ENCODE measurements at regions of chr22 and their contacts with region 1.

Region 1: DNA sequence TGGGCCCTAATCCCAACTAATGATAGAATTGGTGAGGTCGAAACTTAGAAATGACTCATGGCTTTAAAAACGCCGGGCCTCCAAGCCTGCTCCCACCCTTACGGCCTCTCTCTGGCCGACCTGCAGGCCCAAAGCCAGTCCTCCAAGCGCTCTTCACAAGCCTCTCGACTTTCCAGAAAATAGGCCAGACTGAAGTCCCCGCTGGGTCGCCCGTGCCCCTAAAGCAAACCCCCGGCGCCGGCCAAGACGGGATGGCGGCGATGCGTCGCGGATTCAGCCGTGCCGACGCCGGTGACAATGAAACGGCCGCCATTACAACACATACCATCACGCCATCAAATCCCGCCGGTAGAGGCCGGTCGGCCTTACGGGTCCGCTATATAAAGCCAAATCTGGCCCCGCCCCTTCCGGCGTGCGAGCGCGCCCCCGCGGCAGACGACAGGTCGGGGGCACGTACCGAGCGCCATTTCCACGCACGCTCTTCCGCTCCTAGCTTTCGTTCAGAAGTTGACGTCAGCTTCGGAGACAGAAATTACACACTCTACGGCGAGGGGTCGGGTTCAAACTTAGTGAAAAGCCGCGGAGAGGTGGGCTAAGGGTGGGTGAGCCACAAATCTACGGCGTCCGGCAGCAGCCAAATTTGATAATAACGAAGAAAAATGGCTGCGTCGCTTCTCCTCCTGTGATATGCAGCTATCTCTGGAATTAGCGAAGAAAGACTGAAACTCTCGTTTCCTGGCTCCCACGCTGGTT is at the start of gene RPL3:
- DNase-seq: peak; percentile 99
- ATAC-seq: peak; percentile 87
- H3K4me3 Mint-ChIP-seq: peak within 1 kb of the TSS; percentile 100
- H3K27ac Mint-ChIP-seq: peak within 1 kb of the TSS; percentile 99
- H3K4me1 Mint-ChIP-seq: peaks cover 46% of the 10 kb centered on the region
- H3K27me3 Mint-ChIP-seq: peaks cover 2% of the 10 kb centered on the region
- CTCF ChIP-seq: no peak
- total RNA-seq, gene RPL3: 3,087 and 3,439 TPM in 2 replicates

Region 2: GRCh38 chr22:38872172-38872830 is 447.1 kb before region 1 on chr22 and contains the start of gene CBX6:
- CTCF ChIA-PET with region 1: interaction called, 11 read pairs
- POLR2A ChIA-PET with region 1: interaction called, 27 read pairs
- intact Hi-C with region 1: loop called (anchors 1 kb)
- DNase-seq: peak; percentile 97
- ATAC-seq: peak; percentile 73
- H3K4me3 Mint-ChIP-seq: peak within 1 kb of the TSS; percentile 92
- H3K27ac Mint-ChIP-seq: peak within 1 kb of the TSS; percentile 83
- H3K4me1 Mint-ChIP-seq: peaks cover 53% of the 10 kb centered on the region
- H3K27me3 Mint-ChIP-seq: peaks cover 2% of the 10 kb centered on the region
- CTCF ChIP-seq: no peak
- total RNA-seq, gene CBX6: 65.6 and 71.8 TPM in 2 replicates

Region 3: GRCh38 chr22:39152511-39153219 is 166.8 kb before region 1 on chr22 and contains the start of gene CBX7:
- CTCF ChIA-PET with region 1: interaction called, 7 read pairs
- POLR2A ChIA-PET with region 1: interaction called, 88 read pairs
- intact Hi-C with region 1: loop called (anchors 1 kb)
- DNase-seq: peak; percentile 94
- ATAC-seq: peak; percentile 84
- H3K4me3 Mint-ChIP-seq: peak within 1 kb of the TSS; percentile 84
- H3K27ac Mint-ChIP-seq: peak within 1 kb of the TSS; percentile 76
- H3K4me1 Mint-ChIP-seq: peaks cover 46% of the 10 kb centered on the region
- H3K27me3 Mint-ChIP-seq: peaks cover 16% of the 10 kb centered on the region
- CTCF ChIP-seq: no peak
- total RNA-seq, gene CBX7: 42.6 and 45.4 TPM in 2 replicates

Region 4: GRCh38 chr22:39332441-39333064 is 13.1 kb after region 1 on chr22:
- CTCF ChIA-PET with region 1: interaction called, 16 read pairs
- POLR2A ChIA-PET with region 1: interaction called, 26 read pairs
- intact Hi-C with region 1: no loop called
- DNase-seq: no peak
- ATAC-seq: no peak
- H3K4me3 Mint-ChIP-seq: no peak overlapping the region
- H3K27ac Mint-ChIP-seq: no peak overlapping the region
- H3K4me1 Mint-ChIP-seq: no peaks in the 10 kb centered on the region
- H3K27me3 Mint-ChIP-seq: no peaks in the 10 kb centered on the region
- CTCF ChIP-seq: no peak

Region 5: GRCh38 chr22:39395936-39396796 is 76.7 kb after region 1 on chr22:
- CTCF ChIA-PET with region 1: interaction called, 4 read pairs
- POLR2A ChIA-PET with region 1: interaction called, 35 read pairs
- intact Hi-C with region 1: loop called (anchors 1 kb)
- DNase-seq: no peak
- ATAC-seq: no peak
- H3K4me3 Mint-ChIP-seq: no peak overlapping the region
- H3K27ac Mint-ChIP-seq: no peak overlapping the region
- H3K4me1 Mint-ChIP-seq: peaks cover 10% of the 10 kb centered on the region
- H3K27me3 Mint-ChIP-seq: no peaks in the 10 kb centered on the region
- CTCF ChIP-seq: no peak

Region 6: DNA sequence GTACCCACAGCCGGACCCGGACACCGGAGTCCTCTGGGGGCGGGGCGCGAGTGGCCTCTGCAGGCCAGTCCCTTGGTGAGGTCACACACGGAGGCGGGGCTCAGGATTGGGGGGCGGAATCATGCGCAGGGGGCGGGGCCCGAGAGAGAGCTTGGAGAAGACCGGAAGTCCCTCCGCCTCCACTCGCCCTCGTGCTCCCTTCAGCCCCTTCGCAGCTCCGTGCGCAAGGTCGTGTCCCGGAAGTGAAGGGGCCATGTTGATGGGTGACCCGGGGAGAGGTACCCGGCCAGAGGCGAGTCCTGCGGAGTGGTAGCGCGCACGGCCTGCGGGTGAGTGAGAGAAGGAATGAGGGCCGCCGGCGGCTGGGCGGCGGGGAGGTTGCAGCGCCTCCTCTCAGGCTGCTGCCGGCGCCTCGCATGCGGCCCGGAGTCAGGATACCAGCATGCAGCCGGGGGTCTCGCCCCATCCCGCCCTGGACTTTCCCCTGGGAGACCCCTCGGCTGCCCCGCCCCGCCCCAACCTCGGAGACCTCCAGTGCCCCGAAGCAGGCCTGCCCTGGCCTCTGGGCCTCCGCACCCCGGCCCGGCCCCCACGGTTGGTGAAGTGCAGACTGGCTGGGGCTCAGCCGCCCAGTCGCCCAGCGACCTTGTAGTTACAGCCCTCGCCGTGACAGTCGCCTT is 182.8 kb after region 1 on chr22 and contains the start of gene MIEF1:
- CTCF ChIA-PET with region 1: interaction called, 3 read pairs
- POLR2A ChIA-PET with region 1: interaction called, 25 read pairs
- intact Hi-C with region 1: no loop called
- DNase-seq: peak; percentile 89
- ATAC-seq: peak; percentile 96
- H3K4me3 Mint-ChIP-seq: peak within 1 kb of the TSS; percentile 95
- H3K27ac Mint-ChIP-seq: peak within 1 kb of the TSS; percentile 89
- H3K4me1 Mint-ChIP-seq: peaks cover 34% of the 10 kb centered on the region
- H3K27me3 Mint-ChIP-seq: no peaks in the 10 kb centered on the region
- CTCF ChIP-seq: no peak
- total RNA-seq, gene MIEF1: 38.2 and 41.3 TPM in 2 replicates

Measured in activated B cell treated with CpG ODN at 0.5 μM for 24 hours (primary cell).